ENCODE measurements at regions of chr9 and their contacts with region 1.

Region 1: DNA sequence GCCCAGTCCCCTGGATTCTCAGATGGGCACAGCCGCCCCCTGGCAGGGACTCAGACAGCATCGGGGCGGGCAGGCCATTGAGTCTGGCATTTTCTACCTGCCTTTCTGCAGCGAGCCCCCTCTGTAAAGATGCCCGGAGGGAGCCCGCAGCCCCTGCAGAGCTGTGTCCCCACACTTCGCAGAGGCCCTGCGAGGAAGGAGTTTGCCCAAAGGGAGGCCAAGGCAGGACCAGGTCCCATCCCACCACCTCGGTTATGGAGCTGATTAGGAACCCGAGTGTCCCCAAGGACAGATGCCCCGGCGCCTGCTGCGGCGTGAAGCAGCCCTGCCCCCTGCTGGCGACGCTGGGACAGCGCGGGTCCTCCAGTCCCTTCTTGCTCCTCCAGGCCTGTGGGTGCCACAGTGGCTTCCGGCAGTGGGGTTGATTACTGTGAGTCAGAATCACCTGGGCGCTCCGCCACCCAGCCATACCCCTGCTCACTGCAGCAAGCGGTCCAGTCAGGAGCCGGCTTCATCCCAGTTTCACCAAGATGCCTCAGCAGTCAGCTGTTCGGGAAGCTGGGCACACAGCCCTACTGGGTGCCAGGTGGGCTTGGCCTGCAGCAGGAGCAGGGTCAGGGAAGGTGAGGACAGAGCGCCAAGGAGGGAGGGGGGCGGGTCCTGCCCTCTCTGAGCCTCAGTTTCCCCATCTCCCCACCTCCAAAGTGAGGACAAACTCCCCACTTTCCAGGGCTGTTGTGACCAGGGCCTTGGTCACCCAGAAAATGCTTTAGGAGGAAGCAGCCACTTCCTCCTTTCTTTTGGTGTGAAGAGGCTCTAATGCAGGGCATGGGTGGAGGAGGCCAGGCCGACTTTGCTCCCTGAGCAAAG is 117.1 kb downstream of the RXRA start:
- DNase-seq: peak; percentile 94
- H3K4me3 ChIP-seq: peak overlapping the region in 1 of 2 experiments; percentile 44; a peak in 1 of 4 replicates
- H3K27ac ChIP-seq: no peak overlapping the region
- H3K4me1 ChIP-seq: peaks cover 18 to 20% of the 10 kb centered on the region in 2 experiments; a peak in 2 of 4 replicates
- H3K27me3 ChIP-seq: no peaks in the 10 kb centered on the region
- CTCF ChIP-seq: peak; percentile 97
- EP300 ChIP-seq: no peak; a peak in 1 of 4 replicates
- RAD21 ChIP-seq: peak; percentile 99

Region 2: DNA sequence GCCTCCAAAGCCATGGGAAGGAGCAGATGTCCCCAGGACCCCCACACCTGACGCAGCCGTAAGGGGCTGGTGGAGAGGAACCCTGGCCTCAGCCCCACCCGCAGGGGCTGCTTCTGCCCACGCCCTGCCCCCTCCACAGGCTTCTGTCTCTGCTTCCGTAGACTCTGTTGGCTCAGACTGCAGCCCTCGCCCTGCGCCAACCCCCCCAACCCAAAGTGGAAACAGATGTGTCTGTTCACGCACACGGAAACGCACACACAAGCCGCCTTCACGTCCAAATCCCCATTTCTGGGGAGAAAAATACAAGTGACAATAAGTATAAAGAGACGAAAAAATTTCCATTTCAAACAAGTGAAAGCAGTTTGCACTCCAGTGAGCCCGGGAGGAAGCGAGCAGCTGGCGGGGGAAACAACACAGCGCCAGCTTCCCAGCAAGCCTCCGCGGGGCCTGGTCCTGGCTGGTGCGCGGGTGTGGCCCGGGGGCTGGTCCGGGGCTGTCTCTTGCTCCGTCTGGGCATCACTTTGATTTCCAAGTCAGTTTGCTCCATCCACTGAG is 149.7 kb before region 1 on chr9:
- CTCF ChIA-PET with region 1: interaction called, 12 read pairs
- POLR2A ChIA-PET with region 1: no interaction called
- DNase-seq: peak; percentile 92
- H3K4me3 ChIP-seq: peak overlapping the region in 1 of 2 experiments; percentile 24; a peak in 1 of 4 replicates
- H3K27ac ChIP-seq: peak overlapping the region in 1 of 2 experiments; percentile 99; a peak in 2 of 4 replicates
- H3K4me1 ChIP-seq: peaks cover 3 to 38% of the 10 kb centered on the region in 2 experiments; a peak in 1 of 4 replicates
- H3K27me3 ChIP-seq: no peaks in the 10 kb centered on the region; the same call in 1 of the 2 replicates
- CTCF ChIP-seq: no peak
- EP300 ChIP-seq: peak in 1 of 2 experiments; percentile 36; a peak in 1 of 4 replicates
- RAD21 ChIP-seq: no peak

Region 3: GRCh38 chr9:134344068-134344799 is 99.2 kb before region 1 on chr9:
- CTCF ChIA-PET with region 1: interaction called, 23 read pairs
- POLR2A ChIA-PET with region 1: no interaction called
- DNase-seq: no peak
- H3K4me3 ChIP-seq: no peak overlapping the region
- H3K27ac ChIP-seq: no peak overlapping the region
- H3K4me1 ChIP-seq: peaks cover 0 to 77% of the 10 kb centered on the region in 2 experiments; a peak in 1 of 4 replicates
- H3K27me3 ChIP-seq: no peaks in the 10 kb centered on the region
- CTCF ChIP-seq: peak; percentile 13; the same call in 1 of the 2 replicates
- EP300 ChIP-seq: no peak
- RAD21 ChIP-seq: no peak

Region 4: GRCh38 chr9:134378901-134379338 is 64.5 kb before region 1 on chr9:
- CTCF ChIA-PET with region 1: interaction called, 18 read pairs
- POLR2A ChIA-PET with region 1: no interaction called
- DNase-seq: peak; percentile 58
- H3K4me3 ChIP-seq: no peak overlapping the region
- H3K27ac ChIP-seq: no peak overlapping the region; a peak in 1 of 4 replicates
- H3K4me1 ChIP-seq: peaks cover 9 to 77% of the 10 kb centered on the region in 2 experiments; a peak in 3 of 4 replicates
- H3K27me3 ChIP-seq: no peaks in the 10 kb centered on the region
- CTCF ChIP-seq: no peak
- EP300 ChIP-seq: no peak
- RAD21 ChIP-seq: no peak

Region 5: DNA sequence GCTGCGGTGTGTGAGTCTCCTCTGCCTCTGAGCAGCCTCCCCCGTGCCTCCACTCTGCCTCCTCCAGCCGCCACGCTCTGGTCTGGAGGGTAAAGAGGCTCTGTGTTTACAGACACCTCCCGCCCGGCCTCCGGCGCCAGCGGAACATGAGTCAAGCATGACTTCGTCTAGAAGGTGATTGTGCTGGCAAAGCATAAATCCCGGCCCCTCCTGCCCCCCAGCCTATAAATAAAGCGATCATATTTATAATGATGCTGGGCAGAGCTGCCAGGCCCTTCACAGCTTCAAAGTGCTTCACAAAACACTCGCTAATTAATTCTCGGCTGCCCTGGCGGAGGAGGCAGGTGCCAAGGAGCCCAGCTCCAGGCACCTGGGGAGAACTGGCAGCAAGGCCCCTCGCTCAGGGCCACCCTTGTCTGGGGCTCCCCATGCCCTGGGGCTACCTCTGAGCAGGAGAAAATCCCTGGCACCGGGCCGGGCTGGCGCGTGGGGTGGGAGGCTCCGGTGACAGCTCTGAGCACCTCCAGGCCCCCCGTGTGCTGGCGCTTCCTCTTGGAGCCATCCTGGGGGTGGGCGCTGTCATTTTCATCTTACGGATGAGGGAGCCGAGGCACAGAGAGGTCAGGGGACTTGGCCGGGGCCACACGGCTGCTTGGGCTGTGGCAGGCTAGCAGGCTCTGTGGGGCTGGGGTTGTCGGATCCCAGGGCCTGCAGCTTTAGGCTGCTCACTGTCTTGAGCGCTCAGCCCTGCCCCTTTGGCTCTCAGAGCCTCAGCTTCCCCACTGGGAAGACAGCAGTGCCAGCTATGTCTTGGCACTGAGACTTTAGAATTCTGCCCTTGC is 29.3 kb before region 1 on chr9:
- CTCF ChIA-PET with region 1: interaction called, 21 read pairs
- POLR2A ChIA-PET with region 1: no interaction called
- DNase-seq: peak; percentile 76
- H3K4me3 ChIP-seq: no peak overlapping the region; a peak in 1 of 4 replicates
- H3K27ac ChIP-seq: peak overlapping the region in 1 of 2 experiments; percentile 81; a peak in 3 of 4 replicates
- H3K4me1 ChIP-seq: peaks cover 22 to 23% of the 10 kb centered on the region in 2 experiments; a peak in 3 of 4 replicates
- H3K27me3 ChIP-seq: no peaks in the 10 kb centered on the region
- CTCF ChIP-seq: no peak
- EP300 ChIP-seq: peak; percentile 6 to 82; a peak in 2 of 4 replicates
- RAD21 ChIP-seq: no peak

Measured in SK-N-SH (cell line).